ENCODE measurements at regions of chr12 and their contacts with region 1.

Region 1: GRCh38 chr12:15532364-15532977 is 210.2 kb downstream of the PTPRO start:
- DNase-seq: peak; percentile 22 to 80 (median 44)
- ATAC-seq: peak; percentile 83
- H3K4me3 ChIP-seq: no peak overlapping the region
- H3K4me3 Mint-ChIP-seq: peak overlapping the region; percentile 62
- H3K27ac ChIP-seq: no peak overlapping the region
- H3K27ac Mint-ChIP-seq: peak overlapping the region; percentile 63
- H3K4me1 ChIP-seq: peaks cover 15% of the 10 kb centered on the region
- H3K4me1 Mint-ChIP-seq: peaks cover under 1% of the 10 kb centered on the region
- H3K27me3 ChIP-seq: no peaks in the 10 kb centered on the region
- H3K27me3 Mint-ChIP-seq: no peaks in the 10 kb centered on the region
- CTCF ChIP-seq: peak; percentile 78

Region 2: DNA sequence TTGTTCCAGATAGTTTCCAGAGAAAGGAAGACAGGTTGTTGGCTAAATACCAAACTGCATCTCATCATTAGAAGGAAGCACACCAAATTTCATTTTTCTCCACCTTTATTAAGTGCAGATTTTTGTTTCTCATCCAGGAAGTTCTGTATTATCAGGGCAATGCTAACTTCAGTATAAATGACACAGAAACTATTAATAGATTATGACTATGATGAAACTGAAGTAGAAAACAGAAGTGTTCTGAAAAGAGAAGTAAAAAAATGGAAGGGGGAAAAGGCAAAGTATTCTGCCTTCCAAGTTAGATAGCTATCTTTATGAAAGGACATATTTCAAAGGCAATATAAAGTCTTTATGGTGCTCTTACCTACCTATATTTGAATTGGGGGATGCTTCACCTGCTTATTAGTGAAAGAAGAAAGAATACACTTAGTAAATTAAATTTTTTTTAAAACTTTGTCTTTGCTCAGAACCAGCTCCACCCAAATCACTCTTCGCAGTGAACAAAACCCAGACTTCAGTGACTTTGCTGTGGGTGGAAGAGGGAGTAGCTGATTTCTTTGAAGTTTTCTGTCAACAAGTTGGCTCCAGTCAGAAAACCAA is 13.7 kb after region 1 on chr12:
- CTCF ChIA-PET with region 1: interaction called, 18 read pairs
- POLR2A ChIA-PET with region 1: interaction called, 130 read pairs
- intact Hi-C with region 1: loop called in 1 of 2 experiments (anchors 1 kb)
- DNase-seq: peak in 10 of 14 experiments; percentile 21 to 81 (median 45)
- ATAC-seq: peak; percentile 93
- H3K4me3 ChIP-seq: peak overlapping the region; percentile 19
- H3K4me3 Mint-ChIP-seq: peak overlapping the region; percentile 83
- H3K27ac ChIP-seq: peak overlapping the region; percentile 59 to 67
- H3K27ac Mint-ChIP-seq: peak overlapping the region; percentile 100
- H3K4me1 ChIP-seq: peaks cover 22% of the 10 kb centered on the region
- H3K4me1 Mint-ChIP-seq: peaks cover 85% of the 10 kb centered on the region
- H3K27me3 ChIP-seq: no peaks in the 10 kb centered on the region
- H3K27me3 Mint-ChIP-seq: no peaks in the 10 kb centered on the region
- CTCF ChIP-seq: no peak

Region 3: DNA sequence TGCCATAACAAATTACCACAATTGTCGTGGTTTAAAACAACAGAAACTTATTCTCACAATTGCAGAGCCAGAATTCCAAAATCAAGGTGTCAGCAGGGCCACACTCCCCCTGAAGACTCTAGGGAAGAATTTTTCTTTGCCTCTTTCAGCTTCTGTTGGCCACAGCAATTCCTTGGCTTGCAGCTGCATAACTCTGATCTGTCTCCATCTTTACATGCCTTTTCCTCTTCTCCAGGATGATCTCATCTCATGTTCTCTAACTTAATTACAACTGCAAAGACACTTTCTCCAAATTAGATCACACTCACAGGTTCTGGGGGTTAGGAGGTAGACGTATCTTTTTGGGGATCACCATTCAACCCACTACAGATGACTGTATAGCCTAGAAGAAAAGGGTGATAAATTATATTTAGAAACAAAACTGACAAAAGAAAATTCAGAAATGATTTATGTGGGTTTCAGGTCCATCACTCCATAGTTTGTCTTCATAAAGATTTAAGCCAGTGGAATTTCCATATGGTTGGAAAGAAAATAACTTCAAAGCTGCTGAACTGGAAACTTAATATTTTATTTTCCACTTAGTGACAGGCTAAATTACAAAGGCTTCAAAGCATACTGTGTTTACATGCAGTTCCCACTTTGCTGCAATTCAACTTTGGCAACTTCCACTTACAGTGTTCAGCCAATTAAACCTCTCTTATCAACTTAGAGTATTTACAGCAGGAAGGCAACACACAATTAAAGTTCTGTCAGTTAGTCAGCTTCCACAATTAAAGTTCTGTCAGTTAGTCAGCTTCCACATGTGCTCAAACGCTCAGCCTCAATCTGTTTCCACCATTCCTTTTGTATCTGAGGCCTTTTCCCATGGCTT is 43.4 kb after region 1 on chr12:
- CTCF ChIA-PET with region 1: interaction called, 21 read pairs
- POLR2A ChIA-PET with region 1: interaction called, 19 read pairs
- intact Hi-C with region 1: loop called (anchors 1 kb)
- DNase-seq: no peak
- ATAC-seq: no peak
- H3K4me3 ChIP-seq: no peak overlapping the region
- H3K4me3 Mint-ChIP-seq: no peak overlapping the region
- H3K27ac ChIP-seq: no peak overlapping the region
- H3K27ac Mint-ChIP-seq: no peak overlapping the region
- H3K4me1 ChIP-seq: peaks cover 4% of the 10 kb centered on the region
- H3K4me1 Mint-ChIP-seq: peaks cover 24% of the 10 kb centered on the region
- H3K27me3 ChIP-seq: no peaks in the 10 kb centered on the region
- H3K27me3 Mint-ChIP-seq: no peaks in the 10 kb centered on the region
- CTCF ChIP-seq: no peak

Region 4: GRCh38 chr12:15590180-15590826 is 57.8 kb after region 1 on chr12:
- CTCF ChIA-PET with region 1: interaction called, 117 read pairs
- POLR2A ChIA-PET with region 1: interaction called, 24 read pairs
- intact Hi-C with region 1: no loop called
- DNase-seq: peak; percentile 7 to 81 (median 27)
- ATAC-seq: peak; percentile 99
- H3K4me3 ChIP-seq: peak overlapping the region; percentile 14
- H3K4me3 Mint-ChIP-seq: peak overlapping the region; percentile 78
- H3K27ac ChIP-seq: no peak overlapping the region
- H3K27ac Mint-ChIP-seq: peak overlapping the region; percentile 28
- H3K4me1 ChIP-seq: peaks cover 4% of the 10 kb centered on the region
- H3K4me1 Mint-ChIP-seq: peaks cover 9% of the 10 kb centered on the region
- H3K27me3 ChIP-seq: no peaks in the 10 kb centered on the region
- H3K27me3 Mint-ChIP-seq: no peaks in the 10 kb centered on the region
- CTCF ChIP-seq: peak; percentile 86

Region 5: DNA sequence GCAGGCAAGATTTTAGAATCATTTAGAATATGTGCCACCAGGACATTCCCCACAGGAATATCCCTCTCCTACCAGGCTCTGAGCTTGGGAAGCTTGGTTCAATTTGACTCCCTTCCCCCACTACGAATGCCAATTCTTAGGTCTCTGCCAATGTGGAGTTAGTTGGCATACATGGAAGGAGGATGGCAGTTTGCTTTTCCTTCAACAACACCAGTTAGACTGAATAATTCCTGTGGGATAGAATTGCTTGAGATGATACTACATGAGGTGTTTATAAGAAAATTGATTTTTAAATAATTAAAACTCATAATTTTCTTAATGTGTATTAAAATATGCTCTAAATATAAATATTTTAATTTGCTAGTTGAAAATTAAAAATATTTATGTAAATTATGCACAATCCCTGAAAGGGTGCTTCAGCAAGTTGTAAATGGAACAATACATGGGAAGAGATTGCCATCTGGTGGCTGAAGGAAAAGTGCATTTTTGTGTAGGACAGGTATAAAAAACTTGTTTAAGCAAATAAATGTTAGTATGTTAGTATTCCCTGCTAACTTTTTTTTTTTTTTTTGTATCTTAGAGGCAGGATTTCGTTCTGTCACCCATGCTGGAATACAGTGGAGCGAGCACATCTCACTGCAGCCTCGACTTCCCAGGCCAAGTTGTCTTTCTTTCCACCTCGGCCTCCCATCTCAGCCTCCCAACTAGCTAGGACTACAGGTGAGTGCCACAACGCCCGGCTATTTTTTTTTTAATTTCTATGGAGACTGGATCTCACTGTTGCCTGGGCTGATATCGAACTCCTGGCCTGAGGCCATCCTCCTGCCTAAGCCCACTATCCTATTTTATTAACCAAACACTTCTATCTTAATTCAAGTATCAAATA is 323.9 kb after region 1 on chr12:
- CTCF ChIA-PET with region 1: interaction called, 6 read pairs
- POLR2A ChIA-PET with region 1: no interaction called
- intact Hi-C with region 1: loop called (anchors 1 to 2 kb)
- DNase-seq: peak in 10 of 14 experiments; percentile 19 to 80 (median 40)
- ATAC-seq: peak; percentile 61
- H3K4me3 ChIP-seq: no peak overlapping the region
- H3K4me3 Mint-ChIP-seq: no peak overlapping the region
- H3K27ac ChIP-seq: no peak overlapping the region
- H3K27ac Mint-ChIP-seq: no peak overlapping the region
- H3K4me1 ChIP-seq: no peaks in the 10 kb centered on the region
- H3K4me1 Mint-ChIP-seq: no peaks in the 10 kb centered on the region
- H3K27me3 ChIP-seq: no peaks in the 10 kb centered on the region
- H3K27me3 Mint-ChIP-seq: peaks cover 28% of the 10 kb centered on the region
- CTCF ChIP-seq: peak; percentile 79